ENCODE measurements at regions of chr11 and their contacts with region 1.

Region 1: GRCh38 chr11:6481012-6481923 is at the starts of genes ARFIP2 and TIMM10B:
- DNase-seq: peak; percentile 93
- ATAC-seq: peak; percentile 97
- H3K4me3 Mint-ChIP-seq: peak within 1 kb of the TSS; percentile 93
- H3K27ac Mint-ChIP-seq: peak within 1 kb of the TSS; percentile 94
- H3K4me1 Mint-ChIP-seq: peaks cover 30% of the 10 kb centered on the region
- H3K27me3 Mint-ChIP-seq: no peaks in the 10 kb centered on the region
- total RNA-seq, gene ARFIP2: 44.3 to 44.6 TPM
- total RNA-seq, gene TIMM10B: 41.3 to 47.0 TPM

Region 2: GRCh38 chr11:6377902-6378639 is 103.2 kb before region 1 on chr11:
- POLR2A ChIA-PET with region 1: interaction called, 26 read pairs
- DNase-seq: no peak
- ATAC-seq: peak; percentile 91
- H3K4me3 Mint-ChIP-seq: peak overlapping the region; percentile 82
- H3K27ac Mint-ChIP-seq: peak overlapping the region; percentile 97
- H3K4me1 Mint-ChIP-seq: peaks cover 32% of the 10 kb centered on the region
- H3K27me3 Mint-ChIP-seq: peaks cover 2% of the 10 kb centered on the region

Region 3: DNA sequence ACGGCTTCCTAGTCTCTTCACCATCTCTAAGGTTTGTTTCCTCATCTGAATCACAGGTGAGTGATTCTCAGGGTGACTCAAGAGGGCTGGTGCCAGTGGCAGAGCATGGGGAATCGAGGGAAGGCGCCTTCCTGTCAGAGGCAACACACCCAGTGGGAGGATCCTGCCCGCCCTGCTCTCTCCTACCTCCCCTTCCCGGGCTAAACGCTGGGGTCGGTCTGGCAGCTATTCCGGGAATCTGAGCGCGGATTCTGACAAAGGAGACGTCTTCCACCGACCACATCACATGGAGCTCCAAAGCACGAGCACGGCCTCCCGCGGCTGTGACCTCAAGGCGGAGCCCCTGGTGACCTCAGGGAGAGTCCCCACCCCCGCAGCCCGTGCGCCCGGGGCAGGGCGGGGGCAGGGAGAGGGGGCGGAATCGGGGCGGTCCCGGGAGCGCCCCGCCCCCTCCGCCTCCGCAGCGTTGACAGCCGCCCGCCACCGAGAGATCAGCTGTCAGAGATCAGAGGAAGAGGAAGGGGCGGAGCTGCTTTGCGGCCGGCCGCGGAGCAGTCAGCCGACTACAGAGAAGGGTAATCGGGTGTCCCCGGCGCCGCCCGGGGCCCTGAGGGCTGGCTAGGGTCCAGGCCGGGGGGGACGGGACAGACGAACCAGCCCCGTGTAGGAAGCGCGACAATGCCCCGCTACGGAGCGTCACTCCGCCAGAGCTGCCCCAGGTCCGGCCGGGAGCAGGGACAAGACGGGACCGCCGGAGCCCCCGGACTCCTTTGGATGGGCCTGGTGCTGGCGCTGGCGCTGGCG is 91.1 kb before region 1 on chr11 and contains the start of gene SMPD1:
- POLR2A ChIA-PET with region 1: interaction called, 12 read pairs
- DNase-seq: peak; percentile 92
- ATAC-seq: peak; percentile 86
- H3K4me3 Mint-ChIP-seq: peak within 1 kb of the TSS; percentile 96
- H3K27ac Mint-ChIP-seq: peak within 1 kb of the TSS; percentile 95
- H3K4me1 Mint-ChIP-seq: peaks cover 39% of the 10 kb centered on the region
- H3K27me3 Mint-ChIP-seq: no peaks in the 10 kb centered on the region
- total RNA-seq, gene SMPD1: 40.7 to 42.6 TPM

Region 4: DNA sequence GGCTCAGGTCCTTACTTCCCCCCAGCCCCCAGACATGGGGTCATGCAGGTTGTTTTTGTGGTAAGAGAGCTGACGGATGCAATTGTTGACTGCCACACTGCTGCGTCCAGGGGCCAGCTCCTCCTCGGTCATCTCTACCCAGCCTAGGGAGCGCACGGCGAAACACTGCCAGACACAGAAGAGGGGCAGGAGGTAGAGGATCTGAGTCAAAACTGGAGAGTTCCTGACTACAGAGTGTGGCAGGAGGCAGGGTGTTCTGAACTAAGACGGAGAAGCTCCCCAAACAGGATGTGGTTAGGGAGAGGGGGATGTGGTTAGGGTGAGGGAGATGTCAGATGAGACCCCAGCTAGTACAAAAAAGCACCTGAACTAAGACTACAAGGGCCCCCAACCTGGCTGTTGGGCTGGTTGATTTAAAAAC is 78.7 kb before region 1 on chr11:
- POLR2A ChIA-PET with region 1: interaction called, 12 read pairs
- DNase-seq: peak; percentile 70
- ATAC-seq: peak; percentile 90
- H3K4me3 Mint-ChIP-seq: peak overlapping the region; percentile 83
- H3K27ac Mint-ChIP-seq: peak overlapping the region; percentile 94
- H3K4me1 Mint-ChIP-seq: peaks cover 56% of the 10 kb centered on the region
- H3K27me3 Mint-ChIP-seq: no peaks in the 10 kb centered on the region

Region 5: DNA sequence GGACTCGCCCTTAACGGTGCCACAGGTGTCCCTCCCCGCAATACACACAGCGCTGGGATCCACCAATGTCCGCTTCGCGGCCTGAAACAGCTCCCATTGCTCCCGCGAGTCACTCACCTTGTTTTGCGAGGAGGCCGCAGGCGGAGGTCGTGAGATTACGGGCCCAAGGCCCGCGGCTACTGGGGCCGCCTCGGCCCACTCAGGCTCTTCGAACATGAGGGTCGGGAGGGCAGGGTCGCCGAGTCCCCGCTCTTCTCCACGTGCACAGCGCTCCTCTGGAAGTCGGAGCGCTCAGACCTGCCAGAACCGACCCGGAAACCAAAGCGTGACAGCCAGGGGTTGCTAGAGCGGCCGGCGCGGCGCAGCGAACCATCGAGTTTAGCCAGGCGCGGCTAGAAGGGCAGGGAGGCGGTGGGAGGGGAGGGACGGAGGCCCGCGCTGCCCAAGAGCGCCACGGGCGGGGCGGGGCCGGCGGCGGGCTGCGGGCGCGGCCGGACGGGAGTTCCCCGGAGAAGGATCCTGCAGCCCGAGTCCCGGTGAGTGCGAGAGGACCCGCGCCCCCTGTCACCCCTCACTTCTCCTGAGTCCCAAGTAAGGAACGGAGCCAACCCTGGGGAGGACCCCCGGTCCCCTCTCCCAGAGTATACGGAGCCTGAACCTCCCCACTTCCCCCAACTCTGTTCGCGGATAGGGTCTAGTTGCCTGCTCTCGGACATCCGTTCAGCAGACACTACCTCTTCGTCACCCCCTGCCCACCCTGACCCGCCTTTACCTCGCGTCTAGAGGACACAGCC is 122.2 kb after region 1 on chr11 and contains the starts of genes ILK and RRP8:
- POLR2A ChIA-PET with region 1: interaction called, 10 read pairs
- DNase-seq: peak; percentile 90
- ATAC-seq: peak; percentile 75
- H3K4me3 Mint-ChIP-seq: no peak within 1 kb of the TSS
- H3K27ac Mint-ChIP-seq: no peak within 1 kb of the TSS
- H3K4me1 Mint-ChIP-seq: peaks cover 35% of the 10 kb centered on the region
- H3K27me3 Mint-ChIP-seq: no peaks in the 10 kb centered on the region
- total RNA-seq, gene ILK: 195 to 207 TPM
- total RNA-seq, gene RRP8: 31.7 to 34.4 TPM

Region 6: DNA sequence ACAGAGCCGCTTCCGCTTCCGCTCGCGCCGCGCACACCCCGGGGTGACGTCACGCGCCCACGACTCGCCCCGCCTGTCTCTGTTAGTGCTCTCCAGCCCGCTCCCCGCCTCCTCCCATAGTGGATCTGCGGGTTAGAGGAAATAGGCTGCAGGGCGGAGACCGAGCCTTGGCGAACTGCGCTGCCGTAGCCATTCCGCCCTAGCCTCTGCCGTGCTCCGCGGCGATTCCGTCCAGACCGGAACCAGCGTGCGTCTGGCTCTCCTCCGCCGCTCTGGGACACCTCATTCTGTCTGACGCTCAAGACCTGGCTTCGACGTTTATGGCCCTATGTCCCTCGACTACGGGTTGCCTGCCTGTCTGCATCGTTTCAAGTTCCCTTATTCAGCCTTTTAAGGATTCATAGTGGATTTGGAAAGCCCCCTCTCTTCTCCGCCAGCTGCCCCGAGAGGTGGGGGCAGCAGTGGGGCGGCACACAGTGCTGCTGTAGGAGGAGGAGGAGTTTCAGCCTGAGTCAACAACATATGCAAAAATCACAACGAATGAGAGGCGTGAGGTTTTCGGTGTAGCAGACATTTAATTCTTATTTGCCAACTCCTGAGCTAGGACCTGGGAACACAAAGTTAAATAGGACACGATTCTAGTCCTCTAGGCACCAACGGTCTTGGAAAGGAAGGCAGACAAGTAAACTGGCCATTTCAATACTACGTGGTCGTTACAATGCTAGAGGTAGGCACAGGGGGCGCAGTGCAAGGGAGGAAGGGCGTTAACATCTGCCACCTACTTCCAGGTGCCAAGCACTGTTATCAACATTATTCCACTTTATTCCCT is 131.2 kb after region 1 on chr11 and contains the start of gene TAF10:
- POLR2A ChIA-PET with region 1: interaction called, 11 read pairs
- DNase-seq: peak; percentile 96
- ATAC-seq: peak; percentile 94
- H3K4me3 Mint-ChIP-seq: peak within 1 kb of the TSS; percentile 94
- H3K27ac Mint-ChIP-seq: peak within 1 kb of the TSS; percentile 93
- H3K4me1 Mint-ChIP-seq: peaks cover 30% of the 10 kb centered on the region
- H3K27me3 Mint-ChIP-seq: no peaks in the 10 kb centered on the region
- total RNA-seq, gene TAF10: 154 to 156 TPM

Region 7: GRCh38 chr11:6682936-6683861 is 201.9 kb after region 1 on chr11 and contains the start of gene MRPL17:
- POLR2A ChIA-PET with region 1: interaction called, 15 read pairs
- DNase-seq: peak; percentile 97
- ATAC-seq: peak; percentile 97
- H3K4me3 Mint-ChIP-seq: peak within 1 kb of the TSS; percentile 92
- H3K27ac Mint-ChIP-seq: peak within 1 kb of the TSS; percentile 97
- H3K4me1 Mint-ChIP-seq: peaks cover 15% of the 10 kb centered on the region
- H3K27me3 Mint-ChIP-seq: no peaks in the 10 kb centered on the region
- total RNA-seq, gene MRPL17: 50.9 to 51.4 TPM